Ascending aorta (tissue), 2 donors: ENCODE measurements at regions of chr2 and their contacts with region 1.

Region 1: GRCh38 chr2:217510771-217511291 is 492.0 kb downstream of the TNS1 start:
- DNase-seq: peak in 1 of 2 donors; percentile 75
- H3K4me3 ChIP-seq: no peak overlapping the region
- H3K27ac ChIP-seq: no peak overlapping the region
- H3K4me1 ChIP-seq: peaks cover 0 to 6% of the 10 kb centered on the region in 2 donors
- H3K27me3 ChIP-seq: no peaks in the 10 kb centered on the region
- CTCF ChIP-seq: peak; percentile 76 to 86 (median 79)

Region 2: DNA sequence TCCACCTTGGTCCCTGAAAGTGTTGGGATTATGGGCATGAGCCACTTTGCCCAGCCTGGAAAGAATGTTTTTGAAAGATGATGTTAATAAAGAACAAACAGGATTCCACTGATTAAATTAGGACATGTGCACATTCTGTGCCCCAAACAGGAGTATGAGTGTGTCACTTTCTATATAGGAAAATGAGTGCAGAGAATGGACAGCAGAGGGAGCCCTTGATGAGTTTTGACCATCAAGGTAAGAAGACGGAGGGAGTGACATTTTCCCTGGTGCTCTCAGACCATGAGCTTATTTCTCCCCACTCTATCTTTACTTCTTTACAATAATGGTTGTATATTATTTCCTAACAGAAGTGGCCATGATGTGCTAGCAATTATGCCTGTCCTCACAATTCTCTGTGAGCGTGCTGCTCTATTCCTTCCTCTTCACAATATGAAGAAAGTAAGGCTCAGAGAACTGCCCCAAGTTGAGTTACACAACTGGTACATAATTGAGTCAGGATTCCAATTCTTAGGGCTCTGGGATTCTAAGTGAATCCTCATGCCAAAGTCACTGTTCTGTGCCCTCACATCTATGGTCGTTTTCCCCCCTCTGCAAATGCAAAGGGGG is 991.6 kb before region 1 on chr2:
- intact Hi-C with region 1: loop called (anchors 5 kb)
- DNase-seq: peak in 1 of 2 donors; percentile 90
- H3K4me3 ChIP-seq: no peak overlapping the region
- H3K27ac ChIP-seq: peak overlapping the region; percentile 40 to 52
- H3K4me1 ChIP-seq: peaks cover 0 to 10% of the 10 kb centered on the region in 2 donors
- H3K27me3 ChIP-seq: no peaks in the 10 kb centered on the region
- CTCF ChIP-seq: peak; percentile 71 to 83 (median 79)

Region 3: DNA sequence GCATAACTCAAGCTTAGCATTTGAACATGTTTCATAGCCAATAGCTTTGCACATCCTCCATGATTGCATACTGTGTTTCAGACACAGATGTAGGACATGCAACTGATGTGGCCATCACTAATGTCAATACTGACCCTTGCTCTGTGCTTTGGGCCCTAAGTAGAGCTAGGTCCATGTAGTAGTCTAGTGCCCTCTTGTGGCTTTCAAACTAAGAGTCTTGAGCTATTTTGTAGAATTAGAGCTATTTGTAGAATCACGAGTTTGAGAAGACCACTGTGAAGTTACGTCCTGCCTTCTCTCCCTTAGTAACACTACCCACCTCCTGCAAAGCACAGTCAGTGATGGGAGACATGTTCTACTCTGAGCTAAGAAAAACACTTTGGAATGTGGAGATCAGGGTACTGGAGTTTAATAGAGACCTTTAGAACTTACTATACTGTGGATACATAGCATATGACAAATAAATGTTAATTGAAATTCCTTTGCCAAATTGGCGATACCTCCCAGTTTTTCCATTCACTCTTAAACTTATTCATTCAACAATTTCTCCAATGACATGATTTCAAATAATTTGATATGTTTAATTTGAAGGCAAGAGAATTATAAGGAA is 344.5 kb before region 1 on chr2:
- intact Hi-C with region 1: loop called (anchors 2 kb)
- DNase-seq: no peak
- H3K4me3 ChIP-seq: no peak overlapping the region
- H3K27ac ChIP-seq: no peak overlapping the region
- H3K4me1 ChIP-seq: peaks cover 0 to 10% of the 10 kb centered on the region in 2 donors
- H3K27me3 ChIP-seq: no peaks in the 10 kb centered on the region
- CTCF ChIP-seq: peak; percentile 44 to 64 (median 53)

Region 4: GRCh38 chr2:217459680-217460405 is 51.0 kb before region 1 on chr2:
- intact Hi-C with region 1: no loop called
- DNase-seq: no peak
- H3K4me3 ChIP-seq: no peak overlapping the region
- H3K27ac ChIP-seq: no peak overlapping the region
- H3K4me1 ChIP-seq: no peaks in the 10 kb centered on the region
- H3K27me3 ChIP-seq: no peaks in the 10 kb centered on the region
- CTCF ChIP-seq: no peak

Region 5: DNA sequence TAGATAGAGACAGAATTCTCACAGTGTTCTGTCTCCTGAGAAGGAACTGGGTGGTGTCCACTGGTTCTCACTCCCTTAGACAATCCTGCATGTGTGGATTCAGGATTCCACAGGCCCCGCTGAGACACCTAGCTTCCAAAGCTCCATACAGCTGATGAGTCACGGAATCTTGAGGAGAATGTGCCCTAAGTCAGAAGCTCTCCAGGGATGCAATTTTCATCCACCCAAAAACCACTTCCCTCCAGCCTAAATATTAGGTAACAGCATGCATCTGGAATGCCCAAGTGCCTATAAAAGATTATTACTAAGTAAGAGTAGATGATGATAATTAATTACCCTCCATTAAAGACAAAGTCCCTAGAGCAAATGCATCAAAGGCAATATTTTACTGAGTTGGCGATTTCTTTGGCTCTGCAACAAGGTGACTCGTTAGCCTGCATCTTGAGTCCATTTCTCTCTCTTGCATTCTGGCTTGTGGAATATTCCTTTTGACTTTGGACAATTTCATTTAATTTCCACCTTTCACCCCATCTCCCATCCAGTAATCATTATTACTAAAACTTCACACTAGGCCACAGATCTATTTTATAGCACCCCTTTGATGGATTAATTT is 16.9 kb after region 1 on chr2:
- intact Hi-C with region 1: no loop called
- DNase-seq: no peak
- H3K4me3 ChIP-seq: no peak overlapping the region
- H3K27ac ChIP-seq: no peak overlapping the region
- H3K4me1 ChIP-seq: peaks cover 0 to 7% of the 10 kb centered on the region in 2 donors
- H3K27me3 ChIP-seq: no peaks in the 10 kb centered on the region
- CTCF ChIP-seq: no peak

Region 6: GRCh38 chr2:217756375-217757107 is 245.7 kb after region 1 on chr2:
- intact Hi-C with region 1: loop called (anchors 5 kb)
- DNase-seq: peak in 1 of 2 donors; percentile 79
- H3K4me3 ChIP-seq: no peak overlapping the region
- H3K27ac ChIP-seq: peak overlapping the region; percentile 80 to 87
- H3K4me1 ChIP-seq: peaks cover 12 to 50% of the 10 kb centered on the region in 2 donors
- H3K27me3 ChIP-seq: no peaks in the 10 kb centered on the region
- CTCF ChIP-seq: peak; percentile 79 to 97 (median 85)